ENCODE measurements at regions of chr12 and their contacts with region 1.

Region 1: DNA sequence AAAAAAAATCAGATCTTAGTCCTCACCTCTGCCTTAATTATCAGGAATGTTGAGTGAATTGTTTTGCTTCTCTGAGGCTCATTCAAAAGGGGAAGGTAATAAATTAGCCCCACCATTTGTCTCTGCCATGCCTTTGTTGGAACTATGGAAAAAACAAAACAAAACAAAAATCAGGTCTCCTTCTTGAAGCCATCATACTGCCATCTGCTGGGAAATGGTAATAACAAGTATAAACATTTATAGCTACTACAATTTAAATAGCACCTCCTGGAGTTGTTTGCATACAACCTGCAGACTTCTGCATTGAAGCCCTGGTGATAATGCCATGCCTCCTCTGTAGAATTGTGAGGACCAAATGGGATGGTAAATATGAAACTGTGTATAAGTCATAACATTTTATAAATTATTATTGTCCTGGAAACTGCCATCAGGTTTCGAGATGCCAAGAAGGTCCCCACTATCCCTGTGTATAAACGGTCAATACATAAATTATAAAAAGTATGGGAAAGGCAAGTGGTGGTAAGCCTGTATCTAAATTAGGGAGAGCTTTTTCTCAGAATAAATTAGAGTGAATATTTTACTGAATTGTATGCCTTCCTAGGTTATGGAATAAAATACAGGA is 87.2 kb upstream of the FGD4 start:
- DNase-seq: peak in 2 of 35 experiments; percentile 3 to 68
- ATAC-seq: peak; percentile 34 to 51 (median 41)
- H3K4me3 ChIP-seq: no peak overlapping the region
- H3K4me3 Mint-ChIP-seq: no peak overlapping the region
- H3K27ac ChIP-seq: no peak overlapping the region
- H3K27ac Mint-ChIP-seq: peak overlapping the region in 1 of 2 donors; percentile 52
- H3K4me1 ChIP-seq: peaks cover 0 to 3% of the 10 kb centered on the region in 2 experiments
- H3K4me1 Mint-ChIP-seq: peaks cover 2 to 11% (median 7%) of the 10 kb centered on the region in 3 donors
- H3K27me3 ChIP-seq: no peaks in the 10 kb centered on the region
- H3K27me3 Mint-ChIP-seq: no peaks in the 10 kb centered on the region

Region 2: DNA sequence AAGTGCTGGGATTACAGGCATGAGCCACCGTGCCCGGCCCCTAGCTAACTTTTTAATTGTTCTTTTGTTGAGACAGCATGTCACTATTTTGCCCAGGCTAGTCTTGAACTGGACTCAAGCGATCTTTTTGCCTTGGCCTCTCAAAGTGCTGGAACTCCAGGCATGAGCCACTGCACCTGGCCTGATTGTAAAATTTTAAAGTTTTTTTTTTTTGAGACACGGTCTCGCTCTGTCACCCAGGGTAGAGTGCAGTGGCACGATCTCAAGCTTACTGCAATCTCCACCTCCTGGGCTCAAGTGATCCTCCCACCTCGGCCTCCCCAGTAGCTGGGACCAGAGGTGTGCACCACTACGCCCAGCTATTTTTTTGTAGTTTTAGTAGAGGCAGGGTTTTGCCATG is 907.1 kb before region 1 on chr12:
- CTCF ChIA-PET with region 1: interaction called, 6 to 11 read pairs
- POLR2A ChIA-PET with region 1: no interaction called
- DNase-seq: no peak
- ATAC-seq: no peak
- H3K4me3 ChIP-seq: no peak overlapping the region
- H3K4me3 Mint-ChIP-seq: no peak overlapping the region
- H3K27ac ChIP-seq: no peak overlapping the region
- H3K27ac Mint-ChIP-seq: no peak overlapping the region
- H3K4me1 ChIP-seq: no peaks in the 10 kb centered on the region
- H3K4me1 Mint-ChIP-seq: peaks cover 0 to 6% (median 3%) of the 10 kb centered on the region in 3 donors
- H3K27me3 ChIP-seq: peaks cover 0 to 4% of the 10 kb centered on the region in 2 experiments
- H3K27me3 Mint-ChIP-seq: peaks cover 0 to 13% of the 10 kb centered on the region in 2 donors

Region 3: DNA sequence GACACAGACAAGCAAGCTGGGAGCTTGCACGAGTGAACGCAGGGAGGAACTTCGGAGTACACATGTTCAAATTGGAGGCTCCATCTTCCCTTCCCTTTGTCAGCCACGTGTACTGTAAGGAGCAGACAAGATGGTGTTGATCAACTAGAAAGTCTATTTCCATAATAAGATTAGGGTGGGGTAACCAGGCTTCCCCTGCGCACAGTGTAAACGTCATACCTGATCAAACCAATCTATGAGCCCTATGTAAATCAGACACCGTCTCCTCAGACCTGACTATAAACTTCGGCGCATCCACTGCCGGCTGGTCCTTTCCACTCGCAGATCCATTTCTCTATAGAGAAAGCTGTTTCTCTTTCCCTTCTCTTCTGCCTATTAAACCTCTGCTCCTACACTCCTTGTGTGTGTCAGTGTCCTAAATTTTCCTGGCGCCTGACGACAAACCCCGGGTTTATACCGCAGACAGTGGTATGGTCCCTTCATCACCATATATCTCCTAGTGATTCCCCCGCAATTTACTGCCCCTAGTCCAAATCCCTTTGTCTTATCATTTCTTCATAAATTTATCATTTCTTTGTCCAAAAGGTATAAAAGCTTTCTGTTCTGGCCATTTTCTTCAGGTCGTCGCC is 660.2 kb before region 1 on chr12:
- CTCF ChIA-PET with region 1: interaction called, 26 to 86 read pairs
- POLR2A ChIA-PET with region 1: interaction called in 1 of 2 experiments, 9 read pairs
- DNase-seq: no peak
- ATAC-seq: no peak
- H3K4me3 ChIP-seq: no peak overlapping the region
- H3K4me3 Mint-ChIP-seq: peak overlapping the region in 2 of 3 donors; percentile 44 to 50
- H3K27ac ChIP-seq: no peak overlapping the region
- H3K27ac Mint-ChIP-seq: peak overlapping the region; percentile 91 to 96
- H3K4me1 ChIP-seq: peaks cover 2 to 5% of the 10 kb centered on the region in 2 experiments
- H3K4me1 Mint-ChIP-seq: peaks cover 8 to 14% (median 10%) of the 10 kb centered on the region in 3 donors
- H3K27me3 ChIP-seq: no peaks in the 10 kb centered on the region
- H3K27me3 Mint-ChIP-seq: no peaks in the 10 kb centered on the region

Region 4: DNA sequence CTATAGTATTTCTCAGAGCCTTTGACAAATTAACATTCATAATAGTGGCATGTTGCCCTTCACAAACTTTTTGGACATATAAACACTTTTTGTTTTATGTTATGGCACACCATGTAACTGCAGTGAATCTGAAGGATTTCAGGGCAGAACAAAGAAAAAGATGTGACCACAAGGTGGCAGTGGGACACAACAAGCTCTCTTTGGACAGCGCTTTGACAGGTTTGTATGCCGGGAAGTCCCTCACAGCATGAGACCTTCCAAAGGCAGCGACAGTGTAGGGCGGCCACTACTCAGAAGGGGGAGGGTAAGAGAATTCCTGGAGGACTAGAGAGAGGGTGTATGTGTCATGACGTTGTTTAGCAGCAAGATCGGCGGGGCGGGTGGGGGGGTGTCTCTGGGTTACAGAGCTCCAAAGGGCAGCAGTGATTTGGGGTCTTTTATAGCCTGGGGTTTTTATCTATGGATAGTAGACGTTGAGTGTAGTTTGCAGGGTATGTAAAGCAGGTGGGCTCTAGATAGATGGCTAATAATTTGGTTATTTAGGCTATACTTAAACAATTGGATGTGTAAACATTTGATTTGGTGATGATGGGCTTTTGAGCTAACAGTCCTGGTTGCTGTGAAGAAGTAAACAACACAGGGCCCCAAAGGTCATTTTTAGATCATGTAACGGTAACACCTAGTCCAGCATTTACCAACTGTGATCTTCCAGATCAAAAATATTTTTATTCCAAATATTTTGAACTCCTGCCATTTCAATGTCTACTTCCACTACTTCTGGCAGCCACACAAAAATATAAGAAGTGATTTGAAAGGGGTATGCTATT is 629.8 kb before region 1 on chr12:
- CTCF ChIA-PET with region 1: interaction called, 10 to 23 read pairs
- POLR2A ChIA-PET with region 1: no interaction called
- DNase-seq: peak; percentile 37 to 89 (median 60)
- ATAC-seq: peak; percentile 64 to 86 (median 78)
- H3K4me3 ChIP-seq: no peak overlapping the region
- H3K4me3 Mint-ChIP-seq: peak overlapping the region in 1 of 3 donors; percentile 37
- H3K27ac ChIP-seq: peak overlapping the region; percentile 44
- H3K27ac Mint-ChIP-seq: peak overlapping the region; percentile 67 to 79
- H3K4me1 ChIP-seq: peaks cover 0 to 5% of the 10 kb centered on the region in 2 experiments
- H3K4me1 Mint-ChIP-seq: peaks cover 6 to 13% (median 11%) of the 10 kb centered on the region in 3 donors
- H3K27me3 ChIP-seq: no peaks in the 10 kb centered on the region
- H3K27me3 Mint-ChIP-seq: no peaks in the 10 kb centered on the region

Region 5: DNA sequence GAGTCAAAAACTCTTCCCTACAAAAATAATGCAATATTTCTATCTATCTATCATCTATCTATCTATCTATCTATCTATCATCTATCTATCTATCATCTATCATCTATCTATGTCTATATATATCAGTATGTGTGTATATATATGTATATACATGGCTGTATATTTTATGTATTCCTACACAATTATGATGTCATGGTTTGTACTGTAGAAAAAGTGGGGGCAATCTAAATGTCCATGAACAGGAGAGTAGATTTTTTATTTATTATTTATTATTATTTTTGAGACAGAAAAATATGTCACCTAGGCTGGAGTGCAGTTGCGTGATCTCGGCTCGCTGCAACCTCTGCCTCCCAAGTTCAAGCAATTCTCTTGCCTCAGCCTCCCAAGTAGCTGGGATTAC is 251.1 kb before region 1 on chr12:
- CTCF ChIA-PET with region 1: interaction called, 15 to 20 read pairs
- POLR2A ChIA-PET with region 1: no interaction called
- DNase-seq: no peak
- ATAC-seq: no peak
- H3K4me3 ChIP-seq: no peak overlapping the region
- H3K4me3 Mint-ChIP-seq: no peak overlapping the region
- H3K27ac ChIP-seq: no peak overlapping the region
- H3K27ac Mint-ChIP-seq: no peak overlapping the region
- H3K4me1 ChIP-seq: peaks cover 0 to 4% of the 10 kb centered on the region in 2 experiments
- H3K4me1 Mint-ChIP-seq: peaks cover 0 to 10% (median 9%) of the 10 kb centered on the region in 3 donors
- H3K27me3 ChIP-seq: no peaks in the 10 kb centered on the region
- H3K27me3 Mint-ChIP-seq: no peaks in the 10 kb centered on the region

Region 6: DNA sequence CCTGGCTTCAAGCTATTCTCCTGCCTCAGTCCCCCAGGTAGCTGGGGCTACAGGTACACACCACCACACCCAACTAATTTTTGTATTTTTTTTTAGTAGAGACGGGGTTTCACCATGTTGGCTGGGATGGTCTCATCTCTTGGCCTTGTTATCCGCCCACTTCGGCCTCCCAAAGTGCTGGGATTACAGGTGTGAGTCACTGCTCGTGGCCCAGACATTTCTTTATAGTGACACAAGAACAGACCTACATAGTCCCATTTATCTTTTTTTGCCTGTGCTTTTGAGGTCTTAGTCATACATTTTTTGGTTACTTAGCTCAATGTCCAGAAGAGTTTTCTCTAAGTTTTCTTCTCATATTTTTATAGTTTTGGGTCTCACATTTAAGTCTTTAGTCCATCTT is 880.1 kb after region 1 on chr12:
- CTCF ChIA-PET with region 1: no interaction called
- POLR2A ChIA-PET with region 1: no interaction called
- DNase-seq: no peak
- ATAC-seq: no peak
- H3K4me3 ChIP-seq: no peak overlapping the region
- H3K4me3 Mint-ChIP-seq: no peak overlapping the region
- H3K27ac ChIP-seq: no peak overlapping the region
- H3K27ac Mint-ChIP-seq: no peak overlapping the region
- H3K4me1 ChIP-seq: no peaks in the 10 kb centered on the region
- H3K4me1 Mint-ChIP-seq: no peaks in the 10 kb centered on the region
- H3K27me3 ChIP-seq: no peaks in the 10 kb centered on the region
- H3K27me3 Mint-ChIP-seq: no peaks in the 10 kb centered on the region